Activated CD8-positive, alpha-beta T cell treated with anti-CD3 and anti-CD28 coated beads, Interleukin-2, amount 10 ng/mL, durations not matched to agents 7 days and 5 days (primary cell): ENCODE measurements at regions of chr4 and their contacts with region 1.

Region 1: DNA sequence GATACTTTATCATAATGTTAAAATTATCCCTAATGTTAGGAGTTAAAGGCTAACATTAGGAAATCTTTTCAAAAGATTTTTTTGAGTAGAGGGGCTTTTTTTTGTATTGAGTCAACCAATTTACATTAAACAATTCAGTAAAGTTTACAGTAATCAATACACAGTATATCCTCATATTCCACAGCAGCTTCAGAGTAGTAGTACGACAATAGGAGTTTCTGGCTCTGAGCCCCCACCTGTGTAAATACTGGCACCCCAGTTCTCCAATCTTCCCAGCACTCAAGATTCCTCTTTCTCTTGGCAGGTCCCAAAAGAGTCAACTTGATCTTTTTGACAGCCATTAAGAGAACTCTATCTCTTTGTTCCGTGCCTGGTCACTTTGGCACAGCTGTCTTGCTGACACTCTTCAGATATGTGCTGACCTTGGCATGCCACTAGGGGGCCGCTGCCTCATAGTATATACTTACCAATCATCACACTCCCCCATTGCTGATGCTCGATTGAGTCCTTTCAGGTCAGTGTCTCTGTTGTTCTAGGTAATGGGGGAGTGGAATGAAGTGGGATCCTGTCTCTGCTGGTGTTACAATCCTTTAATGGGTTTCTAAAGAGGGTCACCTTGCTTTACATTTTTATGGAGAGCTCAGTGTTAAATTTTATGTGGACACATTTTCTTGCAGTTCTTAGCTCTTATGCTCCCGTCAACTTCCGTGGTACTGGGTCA is 19.5 kb upstream of the CCNI start:
- DNase-seq: peak; percentile 84
- ATAC-seq: peak; percentile 100
- H3K4me3 Mint-ChIP-seq: no peak overlapping the region
- H3K27ac Mint-ChIP-seq: no peak overlapping the region
- H3K4me1 Mint-ChIP-seq: peaks cover 12% of the 10 kb centered on the region
- H3K27me3 Mint-ChIP-seq: no peaks in the 10 kb centered on the region

Region 2: GRCh38 chr4:77075869-77076799 is 19.1 kb before region 1 on chr4 and contains the start of gene CCNI:
- CTCF ChIA-PET with region 1: interaction called, 19 read pairs
- POLR2A ChIA-PET with region 1: interaction called, 4 read pairs
- DNase-seq: peak; percentile 95
- ATAC-seq: peak; percentile 83
- H3K4me3 Mint-ChIP-seq: no peak within 1 kb of the TSS
- H3K27ac Mint-ChIP-seq: peak within 1 kb of the TSS; percentile 100
- H3K4me1 Mint-ChIP-seq: peaks cover 38% of the 10 kb centered on the region
- H3K27me3 Mint-ChIP-seq: no peaks in the 10 kb centered on the region
- total RNA-seq, gene CCNI: 203 to 216 TPM

Region 3: GRCh38 chr4:77126809-77127208 is 31.5 kb after region 1 on chr4:
- CTCF ChIA-PET with region 1: interaction called, 37 read pairs
- POLR2A ChIA-PET with region 1: no interaction called
- DNase-seq: no peak
- ATAC-seq: peak; percentile 47
- H3K4me3 Mint-ChIP-seq: no peak overlapping the region
- H3K27ac Mint-ChIP-seq: no peak overlapping the region
- H3K4me1 Mint-ChIP-seq: peaks cover 15% of the 10 kb centered on the region
- H3K27me3 Mint-ChIP-seq: peaks cover 9% of the 10 kb centered on the region

Region 4: GRCh38 chr4:77146186-77147078 is 51.2 kb after region 1 on chr4:
- CTCF ChIA-PET with region 1: interaction called, 39 read pairs
- POLR2A ChIA-PET with region 1: no interaction called
- DNase-seq: no peak
- ATAC-seq: peak; percentile 27
- H3K4me3 Mint-ChIP-seq: no peak overlapping the region
- H3K27ac Mint-ChIP-seq: peak overlapping the region; percentile 51
- H3K4me1 Mint-ChIP-seq: peaks cover 21% of the 10 kb centered on the region
- H3K27me3 Mint-ChIP-seq: no peaks in the 10 kb centered on the region

Region 5: GRCh38 chr4:77163636-77164035 is 68.4 kb after region 1 on chr4:
- CTCF ChIA-PET with region 1: interaction called, 10 read pairs
- POLR2A ChIA-PET with region 1: no interaction called
- DNase-seq: no peak
- ATAC-seq: no peak
- H3K4me3 Mint-ChIP-seq: no peak overlapping the region
- H3K27ac Mint-ChIP-seq: no peak overlapping the region
- H3K4me1 Mint-ChIP-seq: peaks cover 32% of the 10 kb centered on the region
- H3K27me3 Mint-ChIP-seq: no peaks in the 10 kb centered on the region

Region 6: DNA sequence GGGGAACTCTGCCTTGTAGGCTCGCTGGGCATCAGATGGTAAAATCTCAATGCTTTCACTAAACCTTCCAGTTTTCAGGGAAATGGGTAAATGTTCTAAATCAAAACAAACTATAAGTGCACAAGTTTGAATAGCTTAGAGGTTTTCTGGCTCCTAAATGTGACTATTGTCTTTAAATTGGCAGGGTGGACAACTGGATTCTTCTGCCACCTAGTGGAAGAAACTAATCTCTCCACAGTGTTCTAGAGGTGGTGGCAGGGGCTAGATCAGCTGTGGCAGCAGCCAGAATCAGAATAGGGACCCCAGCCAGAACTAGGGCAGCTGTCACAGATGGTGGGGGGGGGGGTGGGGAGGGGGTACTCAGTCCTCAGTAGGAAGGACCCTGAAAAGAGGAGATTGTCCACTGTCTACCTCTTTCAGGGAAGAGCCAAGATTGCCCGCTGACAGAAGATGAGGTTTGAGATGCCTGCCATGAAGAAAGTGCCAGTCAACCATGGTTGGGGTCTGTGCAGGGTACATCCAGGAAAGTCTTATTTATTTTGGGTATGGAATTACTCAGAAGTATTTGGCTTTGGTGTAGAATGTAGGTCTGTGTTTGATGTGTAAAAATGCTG is 263.2 kb after region 1 on chr4:
- CTCF ChIA-PET with region 1: interaction called, 12 read pairs
- POLR2A ChIA-PET with region 1: no interaction called
- DNase-seq: peak; percentile 23
- ATAC-seq: no peak
- H3K4me3 Mint-ChIP-seq: no peak overlapping the region
- H3K27ac Mint-ChIP-seq: no peak overlapping the region
- H3K4me1 Mint-ChIP-seq: no peaks in the 10 kb centered on the region
- H3K27me3 Mint-ChIP-seq: peaks cover 5% of the 10 kb centered on the region